ENCODE measurements at regions of chr10 and their contacts with region 1.

Region 1: DNA sequence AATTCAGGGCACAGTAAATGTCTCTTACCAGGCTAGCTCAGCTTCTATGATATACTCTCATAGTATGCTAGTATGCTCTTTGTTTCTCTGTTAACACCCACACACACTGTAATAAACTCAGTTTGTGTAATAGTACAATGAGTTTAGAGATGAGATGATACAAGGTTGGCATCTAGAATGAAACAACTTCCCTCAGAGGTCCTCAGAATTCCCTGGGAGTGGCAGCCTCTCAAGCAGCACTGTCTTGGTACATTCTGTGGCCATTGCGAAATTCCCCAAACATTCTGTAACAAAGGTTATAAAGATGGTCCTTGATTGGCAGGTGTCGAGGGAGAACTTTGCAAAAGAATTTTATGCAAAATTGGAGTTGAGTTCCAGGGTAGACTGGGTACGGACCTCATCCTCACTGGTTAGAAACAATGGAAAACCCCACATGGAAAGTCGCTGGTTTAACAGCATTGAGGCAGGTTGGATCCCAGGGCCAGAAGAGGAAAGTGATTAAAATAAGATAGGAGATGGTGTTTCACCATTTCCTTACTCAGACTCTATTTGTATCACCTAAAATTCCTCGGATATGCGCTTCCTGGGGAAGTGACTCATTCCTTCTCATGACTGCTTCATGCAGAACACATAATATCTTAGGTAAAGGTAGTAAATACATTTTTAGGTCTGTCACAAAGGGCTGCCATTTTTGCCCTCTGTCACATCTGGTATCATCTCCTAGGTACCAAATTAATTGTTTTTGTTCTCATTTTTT is 657.8 kb downstream of the SORCS1 start:
- DNase-seq: peak; percentile 85
- ATAC-seq: peak; percentile 70
- H3K4me3 ChIP-seq: no peak overlapping the region
- H3K27ac ChIP-seq: peak overlapping the region; percentile 99
- H3K4me1 ChIP-seq: peaks cover 56% of the 10 kb centered on the region
- H3K27me3 ChIP-seq: no peaks in the 10 kb centered on the region
- CTCF ChIP-seq: no peak

Region 2: DNA sequence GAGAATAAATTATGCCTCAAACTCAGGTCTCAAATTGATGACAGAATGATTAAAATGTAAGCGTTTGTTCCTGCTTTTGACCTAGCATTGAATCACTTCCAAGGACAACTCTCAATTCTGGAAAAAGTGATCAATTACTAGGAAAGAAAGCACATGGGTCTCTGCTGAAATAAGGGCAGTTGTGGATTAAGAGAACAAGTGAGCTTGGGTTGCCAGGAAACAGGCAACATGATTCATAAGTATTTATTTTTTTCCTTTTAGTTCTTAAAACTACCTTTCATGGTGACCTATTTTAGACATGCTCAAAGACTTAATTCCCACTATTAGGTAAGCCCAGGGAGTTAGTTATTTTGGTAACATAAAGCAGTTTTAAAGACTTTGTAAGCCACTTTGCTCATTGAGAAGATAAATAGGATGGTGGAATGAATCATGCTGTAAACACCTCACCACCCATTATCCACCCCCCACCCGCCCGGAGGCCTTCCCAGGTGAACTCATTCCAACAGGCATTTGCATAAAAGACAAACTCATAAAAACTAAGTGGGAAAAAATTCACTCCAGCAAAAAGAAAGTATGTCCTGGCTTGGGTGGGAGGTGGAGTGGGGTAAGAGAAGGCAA is 70.5 kb before region 1 on chr10:
- CTCF ChIA-PET with region 1: no interaction called
- POLR2A ChIA-PET with region 1: no interaction called
- intact Hi-C with region 1: loop called (anchors 5 kb)
- DNase-seq: peak; percentile 92
- ATAC-seq: peak; percentile 66
- H3K4me3 ChIP-seq: no peak overlapping the region
- H3K27ac ChIP-seq: peak overlapping the region; percentile 100
- H3K4me1 ChIP-seq: peaks cover 55% of the 10 kb centered on the region
- H3K27me3 ChIP-seq: no peaks in the 10 kb centered on the region
- CTCF ChIP-seq: no peak

Region 3: DNA sequence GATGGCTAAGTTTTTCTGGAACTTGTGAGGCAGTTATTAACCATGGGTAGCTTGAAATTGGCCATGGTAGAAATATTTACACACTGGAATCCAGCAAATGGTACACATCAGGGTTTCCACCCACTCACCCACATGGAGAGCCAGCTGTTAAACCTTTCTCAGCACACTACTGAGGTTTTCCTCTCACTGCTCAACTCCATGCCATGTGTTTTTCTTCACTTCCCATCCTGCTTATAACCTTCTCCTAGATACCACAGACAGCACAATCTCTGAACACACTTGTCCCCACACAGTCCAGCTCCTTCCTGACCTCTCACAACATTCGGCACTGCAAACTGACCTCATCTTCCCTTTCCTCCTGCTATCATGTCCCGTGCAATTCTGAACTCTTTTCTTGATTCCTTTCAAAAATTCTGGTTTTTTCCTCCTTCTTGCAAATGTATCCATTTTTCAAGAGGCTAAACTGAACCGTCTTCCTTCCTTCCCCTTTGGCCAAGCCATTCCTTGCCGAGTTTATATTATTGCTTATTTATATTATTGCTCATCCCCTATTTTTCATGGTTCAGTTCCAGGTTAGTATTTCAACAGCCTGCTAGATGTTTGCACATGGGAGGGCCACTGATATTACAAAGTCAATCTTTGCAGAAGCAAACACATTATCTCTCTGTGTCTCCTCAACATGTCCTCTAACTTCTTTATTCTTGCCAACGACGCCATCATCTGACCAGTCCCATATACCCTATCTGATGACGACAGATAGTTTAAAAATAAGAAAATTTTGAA is 51.5 kb after region 1 on chr10:
- CTCF ChIA-PET with region 1: no interaction called
- POLR2A ChIA-PET with region 1: no interaction called
- intact Hi-C with region 1: loop called (anchors 5 kb)
- DNase-seq: peak; percentile 87
- ATAC-seq: peak; percentile 54
- H3K4me3 ChIP-seq: peak overlapping the region; percentile 27; the same call in 1 of the 2 replicates
- H3K27ac ChIP-seq: peak overlapping the region; percentile 99
- H3K4me1 ChIP-seq: peaks cover 64% of the 10 kb centered on the region
- H3K27me3 ChIP-seq: no peaks in the 10 kb centered on the region
- CTCF ChIP-seq: peak; percentile 43; the same call in 1 of the 2 replicates

Region 4: GRCh38 chr10:106571192-106571946 is 64.7 kb after region 1 on chr10:
- CTCF ChIA-PET with region 1: interaction called, 12 read pairs
- POLR2A ChIA-PET with region 1: no interaction called
- intact Hi-C with region 1: no loop called
- DNase-seq: peak; percentile 68
- ATAC-seq: peak; percentile 25; the same call in 1 of the 2 replicates
- H3K4me3 ChIP-seq: no peak overlapping the region
- H3K27ac ChIP-seq: peak overlapping the region; percentile 96
- H3K4me1 ChIP-seq: peaks cover 58% of the 10 kb centered on the region
- H3K27me3 ChIP-seq: no peaks in the 10 kb centered on the region
- CTCF ChIP-seq: peak; percentile 69

Measured in PC-3 (cell line).